ENCODE measurements at regions of chr2 and their contacts with region 1.

Region 1: GRCh38 chr2:196088203-196088602 is 19.6 kb upstream of the DNAH7 start:
- DNase-seq: no peak

Region 2: DNA sequence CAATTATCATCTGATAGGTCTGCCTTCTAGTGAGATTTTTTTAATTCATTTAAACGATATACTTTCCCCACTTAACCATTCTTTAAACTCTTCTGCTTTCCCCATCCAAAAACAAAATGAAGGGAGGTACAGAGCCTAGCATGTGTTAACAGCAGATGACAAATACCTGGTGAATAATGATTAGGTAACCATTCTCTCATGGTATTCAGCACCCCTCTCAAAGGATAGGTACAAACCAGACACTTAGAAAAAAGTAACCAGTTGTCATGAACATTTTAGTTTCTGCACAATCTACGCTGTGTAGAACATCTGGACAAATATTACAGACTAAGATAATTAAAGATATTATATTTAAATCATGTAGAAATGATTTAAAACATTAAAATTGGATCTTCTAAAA is 75.9 kb before region 1 on chr2:
- intact Hi-C with region 1: no loop called
- DNase-seq: no peak

Region 3: GRCh38 chr2:196617430-196617829 is 529.2 kb after region 1 on chr2:
- intact Hi-C with region 1: loop called in 1 of 2 experiments (anchors 10 kb)
- DNase-seq: no peak

Measured in posterior vena cava (tissue), 2 donors.